AG04449 (cell line): ENCODE measurements at regions of chr1 and their contacts with region 1.

Region 1: DNA sequence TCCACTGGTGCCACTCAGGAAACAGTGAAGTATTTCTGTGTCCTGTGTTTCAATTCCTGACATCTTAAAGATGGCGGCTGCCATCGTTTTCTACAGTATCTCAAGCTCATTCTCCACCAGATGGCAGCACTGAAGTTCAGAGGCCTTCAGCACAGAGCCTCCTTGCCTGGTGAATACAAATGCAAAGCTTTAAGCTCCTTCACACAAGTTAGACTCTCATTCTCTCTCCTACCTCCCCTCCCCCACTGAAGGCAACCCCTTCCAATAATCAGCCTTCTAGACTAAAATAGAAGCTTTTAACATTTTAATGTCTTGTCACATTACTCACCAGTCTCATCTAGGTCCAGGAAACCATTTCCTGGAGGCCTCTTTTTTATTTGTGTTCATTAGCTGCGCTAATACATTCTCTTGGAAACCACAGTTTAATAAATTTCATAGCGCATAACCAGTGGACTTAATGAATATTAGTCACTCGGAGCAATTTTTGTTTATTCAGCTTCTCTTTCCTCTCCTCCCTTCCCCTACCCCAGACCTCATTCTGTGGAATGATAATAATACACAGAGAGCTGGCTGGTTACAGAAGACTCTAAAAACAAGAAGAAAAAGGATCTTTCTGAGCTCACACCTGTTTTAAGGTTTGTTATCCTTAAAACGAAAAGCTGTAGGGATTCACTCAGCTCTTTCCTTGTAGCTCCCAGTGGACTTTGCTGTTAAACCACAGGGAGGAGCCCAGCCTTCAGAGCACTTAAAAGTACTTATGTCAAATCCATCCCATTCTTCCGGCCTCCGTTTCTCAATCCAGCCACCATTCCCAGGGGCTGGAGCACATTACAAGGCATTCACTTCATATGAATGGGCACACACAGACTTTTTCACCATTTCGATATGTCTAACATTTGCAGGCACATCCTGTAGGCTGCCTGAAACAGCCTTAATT is 384.9 kb downstream of the HLX start:
- DNase-seq: peak; percentile 81
- H3K4me3 ChIP-seq: no peak overlapping the region
- CTCF ChIP-seq: peak; percentile 69

Region 2: GRCh38 chr1:221246628-221247415 is 17.3 kb before region 1 on chr1:
- CTCF ChIA-PET with region 1: interaction called, 52 read pairs
- POLR2A ChIA-PET with region 1: no interaction called
- DNase-seq: no peak
- H3K4me3 ChIP-seq: no peak overlapping the region
- CTCF ChIP-seq: no peak

Region 3: DNA sequence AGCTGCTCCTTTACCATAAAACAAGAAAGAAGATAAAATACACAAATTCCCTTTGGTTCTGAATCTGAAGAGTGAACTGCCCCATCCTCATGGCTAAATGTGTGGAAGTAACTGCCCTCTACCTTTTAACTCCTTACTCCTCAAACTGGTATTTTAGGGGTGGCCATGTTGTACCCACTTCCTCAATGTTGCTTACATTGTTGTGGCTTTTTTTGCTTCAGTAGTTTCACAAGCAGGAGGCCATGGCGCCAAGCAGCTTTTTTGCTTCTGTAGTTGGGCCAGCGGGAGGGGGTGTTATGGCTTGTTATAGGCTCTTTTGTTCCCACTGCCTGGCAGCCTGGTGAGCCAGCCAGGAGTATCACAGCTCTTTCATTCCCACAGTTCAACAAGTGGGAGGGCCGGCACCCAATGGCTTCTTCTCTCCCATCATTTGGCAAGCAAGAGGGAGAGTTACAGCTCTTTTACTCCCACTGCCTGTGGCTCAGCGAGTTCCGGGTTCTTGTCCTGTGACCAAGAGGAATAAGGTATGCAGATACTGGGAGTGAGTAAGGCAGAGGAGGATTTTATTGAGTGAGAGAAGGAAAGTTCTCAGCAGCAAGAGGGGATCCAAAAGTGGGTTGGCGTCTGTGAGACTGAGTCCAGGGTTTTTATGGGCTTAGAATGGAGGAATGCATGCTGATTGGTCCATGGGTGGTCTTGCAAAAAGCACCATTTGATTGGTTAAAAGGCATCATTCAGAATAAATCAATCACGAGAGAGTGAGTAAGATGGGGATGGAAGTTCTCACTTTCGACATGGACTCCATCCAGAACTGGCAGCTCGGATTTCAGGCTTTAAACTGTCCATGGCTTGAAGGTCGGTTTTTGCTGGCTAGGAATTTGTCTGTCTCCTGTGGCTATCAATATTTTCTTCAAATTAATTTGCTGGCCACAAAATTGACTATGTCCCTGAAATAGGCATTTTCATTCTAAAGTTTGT is 44.7 kb after region 1 on chr1:
- CTCF ChIA-PET with region 1: interaction called, 12 read pairs
- POLR2A ChIA-PET with region 1: no interaction called
- DNase-seq: no peak
- H3K4me3 ChIP-seq: no peak overlapping the region
- CTCF ChIP-seq: no peak

Region 4: DNA sequence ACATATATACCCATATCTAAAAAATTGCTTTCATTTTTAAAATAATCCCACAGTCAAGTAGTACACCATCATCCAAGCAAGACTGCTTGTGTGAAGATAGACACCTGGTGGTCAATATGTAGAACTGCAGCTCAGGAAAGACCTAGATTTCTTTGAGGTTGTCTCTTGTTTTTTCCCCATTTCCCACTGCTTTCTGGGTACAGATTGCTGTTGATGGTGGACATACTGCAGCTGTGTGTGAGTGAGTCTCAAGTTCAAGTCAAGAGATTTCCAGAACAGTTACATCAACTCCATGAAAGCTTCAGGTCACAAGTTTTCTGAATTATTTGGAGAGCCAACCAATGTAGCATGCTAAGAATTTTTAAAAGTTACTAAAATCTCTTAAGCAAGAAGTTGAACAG is 171.4 kb after region 1 on chr1:
- CTCF ChIA-PET with region 1: interaction called, 314 read pairs
- POLR2A ChIA-PET with region 1: interaction called, 8 read pairs
- DNase-seq: no peak
- H3K4me3 ChIP-seq: no peak overlapping the region
- CTCF ChIP-seq: peak; percentile 78